ENCODE measurements at regions of chr3 and their contacts with region 1.

Region 1: GRCh38 chr3:124014366-124014942 is 22.5 kb upstream of the ROPN1 start:
- DNase-seq: no peak
- ATAC-seq: no peak
- H3K4me3 Mint-ChIP-seq: no peak overlapping the region
- H3K27ac Mint-ChIP-seq: no peak overlapping the region
- H3K4me1 Mint-ChIP-seq: no peaks in the 10 kb centered on the region
- H3K27me3 Mint-ChIP-seq: peaks cover 32% of the 10 kb centered on the region

Region 2: GRCh38 chr3:123286308-123287023 is 728.0 kb before region 1 on chr3:
- CTCF ChIA-PET with region 1: no interaction called
- POLR2A ChIA-PET with region 1: no interaction called
- intact Hi-C with region 1: no loop called
- DNase-seq: peak; percentile 69
- ATAC-seq: peak; percentile 83
- H3K4me3 Mint-ChIP-seq: no peak overlapping the region
- H3K27ac Mint-ChIP-seq: no peak overlapping the region
- H3K4me1 Mint-ChIP-seq: no peaks in the 10 kb centered on the region
- H3K27me3 Mint-ChIP-seq: no peaks in the 10 kb centered on the region

Region 3: GRCh38 chr3:124078953-124079911 is 64.8 kb after region 1 on chr3:
- CTCF ChIA-PET with region 1: interaction called, 5 read pairs
- POLR2A ChIA-PET with region 1: no interaction called
- intact Hi-C with region 1: loop called (anchors 1 to 5 kb)
- DNase-seq: peak; percentile 28
- ATAC-seq: no peak
- H3K4me3 Mint-ChIP-seq: no peak overlapping the region
- H3K27ac Mint-ChIP-seq: no peak overlapping the region
- H3K4me1 Mint-ChIP-seq: no peaks in the 10 kb centered on the region
- H3K27me3 Mint-ChIP-seq: peaks cover 14% of the 10 kb centered on the region

Measured in activated CD4-positive, alpha-beta T cell treated with anti-CD3 and anti-CD28 coated beads for 36 hours (primary cell).